ENCODE measurements at regions of chr15 and their contacts with region 1.

Region 1: DNA sequence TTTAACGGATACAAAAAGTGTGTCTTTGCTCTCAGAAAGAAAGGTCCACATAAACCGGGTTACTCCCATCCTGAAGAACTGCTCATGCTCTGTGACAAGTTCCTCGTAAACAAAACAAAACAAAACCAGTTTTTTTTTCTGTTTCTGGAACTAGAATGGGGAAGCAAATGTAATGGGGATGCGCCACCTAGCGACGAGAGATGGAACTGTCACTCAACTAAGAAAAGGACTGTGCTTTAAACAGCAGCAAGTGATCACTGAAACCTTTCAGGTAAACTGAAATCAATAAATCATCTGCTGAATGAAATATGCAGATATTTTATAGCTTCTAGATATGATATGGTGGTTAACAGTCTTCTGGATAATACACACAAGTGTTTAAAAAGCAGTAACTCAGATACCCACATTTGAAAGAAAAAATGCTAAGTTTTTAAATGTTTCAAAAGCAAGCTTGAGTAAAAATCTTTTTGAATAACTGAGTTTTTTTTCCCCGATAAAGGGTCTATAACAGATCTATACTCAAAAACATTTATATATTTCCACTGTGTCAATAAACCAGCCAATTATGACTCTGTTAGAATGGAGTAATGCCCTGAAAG is 10.9 kb downstream of the TM2D3 start:
- ATAC-seq: peak in 6 of 8 experiments; percentile 37 to 75 (median 46)
- H3K4me3 ChIP-seq: no peak overlapping the region
- H3K27ac ChIP-seq: no peak overlapping the region
- H3K4me1 ChIP-seq: peaks cover 3 to 12% of the 10 kb centered on the region in 2 donors

Region 2: DNA sequence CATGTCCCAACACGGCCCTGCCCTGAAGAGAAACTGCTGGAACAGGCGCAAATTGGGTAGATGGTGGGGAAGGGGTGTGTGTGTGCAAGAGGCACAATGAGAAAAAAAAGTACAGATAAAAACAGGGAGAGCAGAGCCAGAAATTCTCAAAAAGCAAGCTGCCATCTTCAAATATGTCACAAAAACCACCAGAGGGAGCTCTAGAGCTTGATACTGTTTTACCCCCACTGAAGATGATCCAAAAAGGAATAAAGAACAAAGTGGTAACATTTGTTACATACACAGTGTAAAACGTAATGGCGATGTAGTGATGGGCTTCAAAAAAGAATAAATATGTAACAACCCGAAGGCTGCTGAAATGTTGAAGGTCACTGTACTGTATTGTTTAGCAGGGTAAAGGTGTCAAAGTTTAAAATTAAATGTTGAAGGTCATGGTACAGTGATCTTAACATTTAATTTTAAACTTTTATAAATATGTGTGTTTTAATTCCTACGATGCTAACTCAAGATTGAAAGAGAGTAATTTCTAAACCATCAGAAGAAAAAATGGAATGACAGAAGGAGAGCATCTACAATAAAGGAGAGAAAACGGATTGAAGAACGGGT is 352.3 kb before region 1 on chr15:
- in situ Hi-C with region 1: loop called in 7 of 9 experiments (anchors 10 kb)
- ATAC-seq: peak in 2 of 8 experiments; percentile 22 to 58
- H3K4me3 ChIP-seq: no peak overlapping the region
- H3K27ac ChIP-seq: no peak overlapping the region
- H3K4me1 ChIP-seq: peaks cover 7 to 14% of the 10 kb centered on the region in 2 donors

Region 3: DNA sequence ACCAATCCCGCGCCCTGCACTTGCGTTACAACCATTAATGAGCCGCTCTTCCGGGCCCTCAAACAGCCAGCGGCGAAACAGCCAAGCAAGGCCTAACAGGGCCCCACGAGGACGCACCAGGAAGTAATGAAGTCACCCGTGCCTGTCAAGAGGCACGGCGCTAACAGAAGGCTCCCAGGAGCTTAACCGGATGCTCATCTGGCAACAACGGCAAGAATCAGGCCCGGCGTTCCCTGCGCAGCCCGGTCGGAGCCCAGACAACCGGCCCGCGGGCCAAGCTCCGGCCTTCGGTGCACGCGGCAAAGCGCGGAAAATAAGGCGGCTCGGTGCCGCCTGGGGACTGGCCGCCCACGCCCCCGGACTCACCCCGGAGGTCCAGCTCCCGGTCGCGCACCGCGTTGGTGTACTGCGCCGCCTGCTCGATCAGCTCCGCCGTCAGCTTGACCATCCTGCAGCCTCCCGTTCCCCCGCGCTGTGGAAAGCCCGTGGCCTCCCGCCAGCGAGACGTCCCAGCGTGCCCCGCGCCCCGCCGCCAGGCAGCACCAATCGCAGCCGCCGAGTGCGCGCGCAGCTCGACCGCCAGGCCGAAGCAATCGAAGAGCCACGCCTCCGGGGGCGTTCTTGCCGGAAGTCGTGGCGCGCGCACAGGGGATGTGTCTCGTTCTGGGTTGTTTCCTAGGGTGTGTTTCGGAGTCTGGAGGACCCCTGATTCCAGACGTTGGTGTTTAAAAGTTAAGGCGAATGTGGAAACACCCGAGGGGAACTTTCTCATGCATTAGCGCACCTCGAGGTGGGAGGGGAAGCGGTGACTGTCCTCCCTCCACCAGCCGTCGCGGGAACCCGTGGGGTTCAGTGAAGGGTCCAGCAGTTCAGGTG is 346.3 kb before region 1 on chr15 and contains the start of gene SNRPA1:
- in situ Hi-C with region 1: loop called in 6 of 9 experiments (anchors 10 kb)
- ATAC-seq: peak; percentile 60 to 95 (median 92)
- H3K4me3 ChIP-seq: peak within 1 kb of the TSS; percentile 74 to 93 (median 79)
- H3K27ac ChIP-seq: peak within 1 kb of the TSS; percentile 87 to 92
- H3K4me1 ChIP-seq: peaks cover 10 to 19% of the 10 kb centered on the region in 2 donors
- total RNA-seq, gene SNRPA1: 30.9 to 101 (median 68.4) TPM

Region 4: GRCh38 chr15:101773496-101774105 is 132.3 kb after region 1 on chr15:
- in situ Hi-C with region 1: no loop called
- ATAC-seq: no peak
- H3K4me3 ChIP-seq: no peak overlapping the region
- H3K27ac ChIP-seq: no peak overlapping the region
- H3K4me1 ChIP-seq: no peaks in the 10 kb centered on the region

Measured in motor neuron (in vitro differentiated cells).